Sigmoid colon (tissue), 7 donors: ENCODE measurements at regions of chr5 and their contacts with region 1.

Region 1: GRCh38 chr5:77645158-77645994 is 6.9 kb upstream of the OTP start:
- DNase-seq: no peak
- H3K4me3 ChIP-seq: peak overlapping the region in 2 of 4 donors; percentile 26 to 41
- H3K27ac ChIP-seq: no peak overlapping the region
- H3K4me1 ChIP-seq: peaks cover 0 to 32% (median 28%) of the 10 kb centered on the region in 4 donors
- H3K27me3 ChIP-seq: peaks cover 54 to 64% (median 58%) of the 10 kb centered on the region in 3 donors
- CTCF ChIP-seq: peak in 1 of 4 experiments; percentile 51
- EP300 ChIP-seq: no peak
- POLR2A ChIP-seq: no peak

Region 2: GRCh38 chr5:77266291-77266690 is 379.1 kb before region 1 on chr5:
- intact Hi-C with region 1: no loop called
- DNase-seq: no peak
- H3K4me3 ChIP-seq: no peak overlapping the region
- H3K27ac ChIP-seq: no peak overlapping the region
- H3K4me1 ChIP-seq: peaks cover 0 to 16% (median 8%) of the 10 kb centered on the region in 4 donors
- H3K27me3 ChIP-seq: no peaks in the 10 kb centered on the region
- CTCF ChIP-seq: no peak
- EP300 ChIP-seq: no peak
- POLR2A ChIP-seq: no peak

Region 3: DNA sequence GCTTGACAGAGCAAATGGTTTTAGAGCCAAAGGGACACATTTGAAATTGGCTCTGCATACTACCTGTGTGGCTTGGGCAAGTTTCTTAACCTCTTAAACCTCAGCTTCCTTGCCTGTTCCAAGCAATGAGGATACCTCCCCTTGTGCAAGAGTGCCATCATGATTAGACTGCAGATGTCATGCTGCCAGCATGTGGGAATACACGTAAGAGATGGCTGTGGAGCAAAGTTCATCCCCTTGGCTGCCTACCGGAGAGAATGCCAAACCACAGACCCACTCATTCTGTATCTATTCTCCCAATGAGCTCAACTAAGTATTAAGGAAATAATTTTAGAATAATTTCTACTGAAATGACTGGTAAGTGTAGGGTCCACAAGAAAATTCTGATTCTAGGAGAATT is 254.6 kb before region 1 on chr5:
- intact Hi-C with region 1: no loop called
- DNase-seq: no peak
- H3K4me3 ChIP-seq: no peak overlapping the region
- H3K27ac ChIP-seq: peak overlapping the region in 2 of 4 donors; percentile 57 to 58
- H3K4me1 ChIP-seq: peaks cover 0 to 26% (median 22%) of the 10 kb centered on the region in 4 donors
- H3K27me3 ChIP-seq: no peaks in the 10 kb centered on the region
- CTCF ChIP-seq: no peak
- EP300 ChIP-seq: no peak
- POLR2A ChIP-seq: no peak

Region 4: GRCh38 chr5:77775790-77776553 is 130.6 kb after region 1 on chr5 and contains the start of gene TBCA:
- intact Hi-C with region 1: loop called (anchors 5 kb)
- DNase-seq: peak; percentile 93
- H3K4me3 ChIP-seq: peak within 1 kb of the TSS; percentile 56 to 75 (median 71)
- H3K27ac ChIP-seq: peak within 1 kb of the TSS; percentile 94 to 98 (median 96)
- H3K4me1 ChIP-seq: peaks cover 0 to 49% (median 38%) of the 10 kb centered on the region in 4 donors
- H3K27me3 ChIP-seq: no peaks in the 10 kb centered on the region
- CTCF ChIP-seq: peak in 2 of 4 experiments; percentile 20 to 26
- EP300 ChIP-seq: no peak
- POLR2A ChIP-seq: peak; percentile 77 to 80
- total RNA-seq, gene TBCA: 192 to 231 (median 214) TPM

Region 5: DNA sequence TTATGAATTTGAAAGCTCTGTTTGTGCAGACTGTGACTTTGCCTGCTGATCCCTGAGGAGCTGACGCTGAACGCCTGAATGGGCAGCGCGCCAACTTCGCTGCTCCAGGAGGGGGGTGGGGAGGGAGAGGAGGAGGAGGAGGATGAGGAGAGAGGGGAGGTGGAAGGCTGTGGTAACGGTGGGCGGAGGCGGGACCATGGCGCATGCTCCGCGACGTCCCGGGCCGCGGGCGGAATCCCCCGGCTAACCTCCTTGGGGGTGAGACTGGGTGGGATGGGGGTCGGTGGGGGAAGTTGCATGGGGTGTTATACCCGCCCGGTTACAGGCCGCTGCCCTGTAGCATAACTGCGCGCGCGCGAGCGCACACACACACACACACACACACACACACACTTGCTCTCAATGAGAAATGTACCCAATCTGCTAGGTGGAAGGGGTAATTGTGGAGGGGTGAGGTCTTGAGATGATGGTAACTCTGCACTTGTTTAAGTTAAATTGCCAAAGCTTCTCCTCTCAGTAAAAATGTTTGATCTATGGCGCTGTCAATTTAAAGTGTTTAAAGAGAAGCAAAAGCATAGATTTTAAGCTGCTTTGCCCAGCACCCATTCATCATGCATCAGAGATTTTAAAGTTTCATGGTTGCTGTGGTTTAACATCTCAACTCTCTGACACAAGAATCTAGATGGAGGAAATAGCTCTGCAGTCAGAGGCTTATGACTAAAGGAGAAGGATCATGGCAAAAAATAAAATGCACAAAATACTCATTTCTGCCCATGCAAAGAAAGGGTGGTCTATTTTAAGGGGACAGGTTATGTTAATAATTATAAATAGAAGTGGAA is 207.4 kb after region 1 on chr5:
- intact Hi-C with region 1: loop called (anchors 5 kb)
- DNase-seq: peak; percentile 77
- H3K4me3 ChIP-seq: peak overlapping the region; percentile 36 to 65 (median 58)
- H3K27ac ChIP-seq: peak overlapping the region in 2 of 4 donors; percentile 63 to 68
- H3K4me1 ChIP-seq: peaks cover 0 to 14% (median 4%) of the 10 kb centered on the region in 4 donors
- H3K27me3 ChIP-seq: no peaks in the 10 kb centered on the region
- CTCF ChIP-seq: no peak
- EP300 ChIP-seq: no peak
- POLR2A ChIP-seq: no peak

Region 6: GRCh38 chr5:77972469-77973252 is 327.3 kb after region 1 on chr5:
- intact Hi-C with region 1: loop called (anchors 10 kb)
- DNase-seq: no peak
- H3K4me3 ChIP-seq: peak overlapping the region in 3 of 4 donors; percentile 7 to 40 (median 39)
- H3K27ac ChIP-seq: no peak overlapping the region
- H3K4me1 ChIP-seq: peaks cover 0 to 20% (median 17%) of the 10 kb centered on the region in 4 donors
- H3K27me3 ChIP-seq: peaks cover 25 to 71% (median 40%) of the 10 kb centered on the region in 3 donors
- CTCF ChIP-seq: no peak
- EP300 ChIP-seq: no peak
- POLR2A ChIP-seq: no peak

Region 7: DNA sequence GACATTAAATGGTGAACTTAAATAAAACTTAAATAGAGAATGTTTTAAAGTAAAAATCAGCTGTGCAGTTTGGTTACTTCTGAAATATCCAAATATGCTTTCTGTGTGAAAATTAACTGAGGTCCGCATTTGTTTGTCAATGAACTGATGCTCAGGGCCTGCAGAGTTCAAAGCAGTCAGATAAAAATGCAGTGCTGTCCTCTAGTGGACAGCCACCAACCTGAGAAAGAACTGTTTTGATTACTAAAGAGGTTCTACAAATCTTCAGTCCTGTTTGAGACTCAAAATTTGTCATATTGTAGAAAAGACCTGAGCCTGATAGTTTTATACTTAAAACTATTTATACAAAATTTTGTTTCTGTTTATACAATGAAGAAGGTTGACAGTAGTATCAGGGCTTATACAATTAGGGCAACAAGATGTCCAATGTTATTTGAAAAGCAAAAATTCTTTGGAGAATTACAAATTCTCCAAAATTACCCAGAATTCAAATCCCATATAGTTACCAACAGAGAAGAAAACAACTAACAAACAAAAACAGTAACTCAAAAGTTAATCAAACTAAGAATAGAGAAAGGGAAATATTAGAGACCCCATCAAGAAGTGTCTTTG is 363.1 kb after region 1 on chr5:
- intact Hi-C with region 1: loop called (anchors 10 kb)
- DNase-seq: no peak
- H3K4me3 ChIP-seq: no peak overlapping the region
- H3K27ac ChIP-seq: no peak overlapping the region
- H3K4me1 ChIP-seq: peaks cover 0 to 8% (median 6%) of the 10 kb centered on the region in 4 donors
- H3K27me3 ChIP-seq: no peaks in the 10 kb centered on the region
- CTCF ChIP-seq: peak in 2 of 4 experiments; percentile 50 to 57
- EP300 ChIP-seq: no peak
- POLR2A ChIP-seq: no peak